Dendritic cell treated with granulocyte-macrophage colony-stimulating factor and Interleukin-4, amounts not matched to agents 40 ng/mL and 50 ng/mL, for 4 days (primary cell): ENCODE measurements at regions of chr12 and their contacts with region 1.

Region 1: DNA sequence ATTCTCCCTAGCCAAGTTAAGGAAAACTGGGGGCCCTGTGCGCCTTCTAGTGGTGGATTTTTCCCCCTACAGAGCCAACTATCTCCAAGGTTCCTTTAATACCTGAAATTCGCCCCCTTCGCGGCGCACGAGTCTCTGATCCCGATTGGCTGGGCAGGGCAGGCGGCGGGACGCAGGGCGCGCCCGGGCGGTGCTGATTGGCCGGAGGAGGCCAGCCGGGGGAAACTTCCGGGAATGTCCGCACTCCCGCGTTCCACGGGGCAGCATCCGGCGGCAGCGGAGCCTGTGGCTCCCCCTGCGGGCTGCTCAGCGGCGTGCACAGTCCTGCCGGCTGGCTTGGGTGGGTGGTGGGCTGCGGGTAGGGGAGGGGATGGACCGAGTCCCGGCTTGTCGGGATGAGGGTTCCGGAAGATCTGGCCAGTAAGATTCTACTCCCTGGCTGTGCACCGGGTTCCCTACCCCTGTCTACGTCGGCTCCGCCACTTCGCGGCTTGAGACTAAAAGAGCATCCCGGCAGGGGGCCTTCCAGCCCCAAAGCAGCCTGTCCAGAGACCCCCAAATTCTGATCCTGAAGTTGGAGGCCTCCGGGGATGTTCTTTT is at the start of gene NABP2:
- H3K4me3 Mint-ChIP-seq: peak within 1 kb of the TSS; percentile 81
- H3K27ac Mint-ChIP-seq: peak within 1 kb of the TSS; percentile 100
- H3K4me1 Mint-ChIP-seq: peaks cover 52% of the 10 kb centered on the region
- H3K27me3 Mint-ChIP-seq: no peaks in the 10 kb centered on the region

Region 2: GRCh38 chr12:56206457-56207166 is 17.6 kb before region 1 on chr12:
- intact Hi-C with region 1: loop called (anchors 2 kb)
- H3K4me3 Mint-ChIP-seq: no peak overlapping the region
- H3K27ac Mint-ChIP-seq: no peak overlapping the region
- H3K4me1 Mint-ChIP-seq: peaks cover 10% of the 10 kb centered on the region
- H3K27me3 Mint-ChIP-seq: no peaks in the 10 kb centered on the region

Region 3: GRCh38 chr12:56258057-56258819 is 34.0 kb after region 1 on chr12 and contains the start of gene ANKRD52:
- intact Hi-C with region 1: loop called (anchors 5 kb)
- H3K4me3 Mint-ChIP-seq: peak within 1 kb of the TSS; percentile 87
- H3K27ac Mint-ChIP-seq: peak within 1 kb of the TSS; percentile 86
- H3K4me1 Mint-ChIP-seq: peaks cover 18% of the 10 kb centered on the region
- H3K27me3 Mint-ChIP-seq: no peaks in the 10 kb centered on the region